ENCODE measurements at regions of chr2 and their contacts with region 1.

Region 1: DNA sequence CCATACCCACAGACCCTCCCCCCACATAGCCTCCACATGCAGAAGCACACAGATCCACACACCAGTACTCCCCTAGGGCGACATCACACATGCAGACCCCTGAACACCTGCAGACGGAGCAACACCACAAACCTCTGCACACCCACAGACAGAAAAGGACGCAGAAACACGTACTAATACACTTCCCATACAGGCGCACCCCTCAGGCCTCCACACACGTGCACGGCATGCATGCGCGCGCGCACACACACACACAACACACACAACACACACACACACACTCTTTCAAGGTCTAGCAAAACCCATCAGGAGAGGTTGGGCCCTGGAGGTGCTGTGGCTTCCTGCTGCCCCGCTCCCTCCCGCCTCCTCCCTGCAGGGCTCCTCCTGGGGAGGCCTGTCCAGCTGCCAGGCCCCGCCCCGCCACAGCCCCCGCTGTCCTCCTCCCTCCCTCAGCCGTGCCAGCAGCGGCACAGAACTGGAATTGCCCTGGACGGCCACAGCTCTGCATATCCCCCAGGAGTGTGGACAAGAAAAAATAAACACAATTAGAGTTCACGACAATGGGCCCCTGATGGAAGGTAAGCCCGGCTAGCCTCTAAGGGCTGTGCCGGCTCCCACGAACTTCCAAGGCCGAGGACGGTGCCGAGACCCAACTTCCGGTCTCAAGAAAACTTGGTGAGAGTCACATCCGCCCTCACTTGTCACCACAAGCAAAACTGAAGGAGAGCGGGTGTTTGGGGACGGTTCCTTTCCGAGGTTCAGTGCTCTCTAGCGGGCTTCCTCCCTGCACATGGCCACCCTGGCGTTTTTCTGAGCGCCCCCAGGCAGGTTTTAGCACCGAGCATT is 6.8 kb downstream of the ZFP36L2 start:
- DNase-seq: peak; percentile 85 to 87
- H3K4me3 ChIP-seq: peak overlapping the region; percentile 69 to 96 (median 91)
- H3K27ac ChIP-seq: peak overlapping the region; percentile 90 to 99
- H3K4me1 ChIP-seq: peaks cover 0 to 30% of the 10 kb centered on the region in 2 donors
- H3K27me3 ChIP-seq: no peaks in the 10 kb centered on the region
- CTCF ChIP-seq: peak in 2 of 3 donors; percentile 8 to 14
- POLR2A ChIP-seq: no peak

Region 2: GRCh38 chr2:43131024-43131889 is 88.3 kb before region 1 on chr2:
- intact Hi-C with region 1: loop called (anchors 10 kb)
- DNase-seq: peak; percentile 88 to 95
- H3K4me3 ChIP-seq: peak overlapping the region in 1 of 3 donors; percentile 9
- H3K27ac ChIP-seq: peak overlapping the region; percentile 89 to 93
- H3K4me1 ChIP-seq: peaks cover 8 to 25% of the 10 kb centered on the region in 2 donors
- H3K27me3 ChIP-seq: no peaks in the 10 kb centered on the region
- CTCF ChIP-seq: peak; percentile 64 to 72 (median 66)
- POLR2A ChIP-seq: no peak

Region 3: GRCh38 chr2:43174368-43174916 is 45.2 kb before region 1 on chr2:
- intact Hi-C with region 1: loop called (anchors 2 kb)
- DNase-seq: no peak
- H3K4me3 ChIP-seq: no peak overlapping the region
- H3K27ac ChIP-seq: peak overlapping the region; percentile 35 to 73
- H3K4me1 ChIP-seq: peaks cover 4% of the 10 kb centered on the region in 2 donors
- H3K27me3 ChIP-seq: no peaks in the 10 kb centered on the region
- CTCF ChIP-seq: no peak
- POLR2A ChIP-seq: no peak

Measured in breast epithelium (tissue), 4 donors.